ENCODE measurements at regions of chr14 and their contacts with region 1.

Region 1: DNA sequence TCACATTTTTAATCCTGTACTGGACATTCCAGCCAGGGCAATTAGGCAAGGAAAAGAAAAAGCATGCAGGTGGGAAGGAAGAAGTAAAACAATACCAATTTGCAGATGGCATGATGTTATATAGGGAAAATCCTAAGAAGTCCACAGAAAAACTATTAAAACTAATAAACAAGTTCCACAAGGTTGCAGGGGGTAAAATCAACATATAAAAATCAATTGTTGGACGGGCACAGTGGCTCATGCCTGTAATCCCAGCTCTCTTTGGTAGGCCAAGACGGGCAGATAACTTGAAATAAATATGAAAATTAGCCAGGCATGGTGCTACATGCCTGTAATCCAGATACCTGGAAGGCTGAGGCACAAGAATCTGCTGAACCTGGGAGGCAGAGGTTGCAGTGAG is 31.9 kb downstream of the SEC23A start:
- DNase-seq: no peak
- CTCF ChIP-seq: no peak

Region 2: GRCh38 chr14:39060818-39061437 is 10.2 kb before region 1 on chr14:
- CTCF ChIA-PET with region 1: interaction called, 3 read pairs
- POLR2A ChIA-PET with region 1: interaction called, 12 read pairs
- DNase-seq: peak; percentile 60
- CTCF ChIP-seq: no peak

Region 3: DNA sequence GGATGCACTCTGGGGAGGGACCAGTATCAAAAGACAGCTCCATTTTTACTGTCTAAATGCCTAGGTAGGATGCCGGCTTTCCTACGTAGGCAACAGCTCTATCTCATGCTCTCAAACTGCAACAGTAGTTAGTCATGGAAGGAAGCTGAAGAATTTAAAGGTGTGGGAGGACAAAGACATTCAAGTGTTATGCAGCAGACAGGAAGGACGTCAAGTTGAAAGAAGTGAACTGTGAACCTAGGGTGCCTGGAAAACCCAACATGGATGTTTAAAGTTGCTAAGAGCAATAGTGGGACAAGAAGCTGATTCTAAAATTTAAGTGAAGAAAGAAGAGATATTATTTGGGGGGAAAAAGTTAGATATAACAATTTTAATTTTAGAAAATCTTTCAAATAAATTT is 26.1 kb after region 1 on chr14:
- CTCF ChIA-PET with region 1: no interaction called
- POLR2A ChIA-PET with region 1: no interaction called
- DNase-seq: no peak
- CTCF ChIP-seq: no peak

Region 4: GRCh38 chr14:39114073-39114838 is 43.2 kb after region 1 on chr14 and contains the start of gene GEMIN2:
- CTCF ChIA-PET with region 1: no interaction called
- POLR2A ChIA-PET with region 1: no interaction called
- DNase-seq: peak; percentile 93
- CTCF ChIP-seq: no peak